HAP-1 (cell line): ENCODE measurements at regions of chrX and their contacts with region 1.

Region 1: DNA sequence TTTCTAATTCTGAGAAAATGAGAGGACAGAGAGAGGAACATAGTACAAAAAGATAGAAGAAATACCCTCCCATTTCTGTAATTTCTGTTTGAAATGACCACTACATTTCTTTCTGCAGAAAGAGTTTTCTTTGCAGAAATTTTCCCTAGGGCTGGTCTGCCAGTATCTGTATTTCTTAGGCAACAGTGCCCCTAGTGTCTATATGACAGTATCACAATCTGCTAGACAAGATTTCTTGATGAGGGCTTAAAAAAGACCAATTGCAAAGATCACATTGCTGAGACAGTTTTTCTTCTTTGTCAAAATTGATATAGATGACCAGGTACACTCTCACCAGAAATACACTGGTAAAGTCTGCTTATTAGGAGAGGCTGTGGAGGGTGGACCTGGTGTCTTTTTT is 81.0 kb upstream of the ZDHHC15 start:
- DNase-seq: no peak
- H3K4me3 ChIP-seq: no peak overlapping the region
- H3K4me1 ChIP-seq: no peaks in the 10 kb centered on the region
- H3K27me3 ChIP-seq: no peaks in the 10 kb centered on the region

Region 2: DNA sequence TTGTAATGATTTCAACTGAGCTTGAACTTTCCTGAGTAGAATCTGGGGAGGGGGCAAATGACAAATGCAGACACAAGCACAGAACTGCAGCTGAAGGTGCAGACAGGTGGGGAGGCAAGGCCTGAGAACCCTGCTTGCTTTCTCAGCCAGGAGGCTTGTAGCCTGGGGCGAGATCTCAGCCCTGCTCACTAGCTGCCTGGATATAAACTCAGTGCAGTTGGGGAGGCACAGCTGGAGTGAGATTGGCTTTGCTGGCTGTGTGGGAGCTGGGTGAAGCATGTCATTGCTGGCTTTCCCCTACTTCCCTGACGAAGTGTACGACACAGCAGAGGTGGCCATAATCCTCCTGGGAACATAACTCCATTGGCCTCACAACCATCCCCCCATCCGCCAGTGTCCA is 623.0 kb before region 1 on chrX:
- in situ Hi-C with region 1: no loop called
- DNase-seq: no peak
- H3K4me3 ChIP-seq: no peak overlapping the region
- H3K4me1 ChIP-seq: no peaks in the 10 kb centered on the region
- H3K27me3 ChIP-seq: no peaks in the 10 kb centered on the region

Region 3: DNA sequence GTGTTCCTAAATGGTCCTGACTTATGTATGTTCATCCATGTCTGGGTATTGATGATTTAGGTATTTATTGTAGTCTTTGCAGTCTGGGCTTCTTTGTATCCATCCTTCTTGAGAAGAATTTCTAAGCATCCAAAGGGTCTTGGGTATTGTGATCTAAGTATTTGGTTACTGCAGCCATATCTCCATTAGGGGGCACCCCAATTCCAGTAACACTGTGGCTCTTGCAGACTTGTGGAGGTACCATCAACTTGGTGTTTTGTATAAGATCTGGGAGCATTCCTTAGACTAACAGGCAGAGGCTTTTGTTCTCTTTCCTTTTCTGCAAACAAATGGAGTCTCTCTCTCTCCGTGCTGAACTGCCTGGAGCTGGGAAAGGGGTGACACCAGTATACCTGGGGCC is 564.9 kb before region 1 on chrX:
- in situ Hi-C with region 1: loop called (anchors 25 kb)
- DNase-seq: peak; percentile 43 to 63
- H3K4me3 ChIP-seq: no peak overlapping the region
- H3K4me1 ChIP-seq: no peaks in the 10 kb centered on the region
- H3K27me3 ChIP-seq: no peaks in the 10 kb centered on the region

Region 4: GRCh38 chrX:75522565-75523431 is 81.0 kb before region 1 on chrX and contains the start of gene ZDHHC15:
- in situ Hi-C with region 1: no loop called
- DNase-seq: peak; percentile 57 to 71
- H3K4me3 ChIP-seq: peak within 1 kb of the TSS; percentile 38
- H3K4me1 ChIP-seq: peaks cover 6% of the 10 kb centered on the region
- H3K27me3 ChIP-seq: no peaks in the 10 kb centered on the region